T-cell (primary cell): ENCODE measurements at regions of chr5 and their contacts with region 1.

Region 1: DNA sequence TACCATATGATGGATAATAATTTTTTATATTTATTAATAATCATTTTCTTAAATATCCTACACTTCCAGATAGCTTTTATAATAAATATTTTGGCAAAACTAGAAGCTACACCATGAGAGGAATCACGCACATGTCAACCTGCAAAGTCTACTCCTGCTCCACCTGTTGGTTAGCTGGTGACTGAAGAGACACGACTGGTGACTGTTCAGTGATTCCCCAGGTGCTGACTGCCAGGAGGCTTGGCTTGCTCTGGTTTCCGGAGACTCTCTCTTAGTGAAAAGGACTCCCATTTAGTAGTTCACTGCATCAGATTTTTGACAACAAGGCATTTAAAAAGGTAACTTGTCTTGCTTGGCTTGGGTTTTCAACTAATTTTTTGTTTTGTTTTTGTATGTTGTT is 20.9 kb downstream of the GZMA start:
- DNase-seq: no peak
- ATAC-seq: no peak
- H3K4me3 ChIP-seq: no peak overlapping the region
- H3K4me3 Mint-ChIP-seq: no peak overlapping the region
- H3K27ac ChIP-seq: no peak overlapping the region
- H3K27ac Mint-ChIP-seq: no peak overlapping the region
- H3K4me1 ChIP-seq: no peaks in the 10 kb centered on the region
- H3K4me1 Mint-ChIP-seq: peaks cover 0 to 2% (median 0%) of the 10 kb centered on the region in 3 donors
- H3K27me3 ChIP-seq: no peaks in the 10 kb centered on the region
- H3K27me3 Mint-ChIP-seq: no peaks in the 10 kb centered on the region

Region 2: GRCh38 chr5:55096861-55097260 is 26.5 kb before region 1 on chr5:
- CTCF ChIA-PET with region 1: no interaction called
- POLR2A ChIA-PET with region 1: interaction called in 1 of 2 experiments, 11 read pairs
- DNase-seq: peak; percentile 27 to 85 (median 63)
- ATAC-seq: peak; percentile 82 to 91 (median 88)
- H3K4me3 ChIP-seq: no peak overlapping the region
- H3K4me3 Mint-ChIP-seq: peak overlapping the region; percentile 29 to 77 (median 42)
- H3K27ac ChIP-seq: peak overlapping the region; percentile 70
- H3K27ac Mint-ChIP-seq: peak overlapping the region; percentile 91 to 98
- H3K4me1 ChIP-seq: peaks cover 27 to 44% of the 10 kb centered on the region in 2 experiments
- H3K4me1 Mint-ChIP-seq: peaks cover 86 to 92% (median 91%) of the 10 kb centered on the region in 3 donors
- H3K27me3 ChIP-seq: no peaks in the 10 kb centered on the region
- H3K27me3 Mint-ChIP-seq: no peaks in the 10 kb centered on the region